Endothelial cell of umbilical vein (primary cell): ENCODE measurements at regions of chr9 and their contacts with region 1.

Region 1: DNA sequence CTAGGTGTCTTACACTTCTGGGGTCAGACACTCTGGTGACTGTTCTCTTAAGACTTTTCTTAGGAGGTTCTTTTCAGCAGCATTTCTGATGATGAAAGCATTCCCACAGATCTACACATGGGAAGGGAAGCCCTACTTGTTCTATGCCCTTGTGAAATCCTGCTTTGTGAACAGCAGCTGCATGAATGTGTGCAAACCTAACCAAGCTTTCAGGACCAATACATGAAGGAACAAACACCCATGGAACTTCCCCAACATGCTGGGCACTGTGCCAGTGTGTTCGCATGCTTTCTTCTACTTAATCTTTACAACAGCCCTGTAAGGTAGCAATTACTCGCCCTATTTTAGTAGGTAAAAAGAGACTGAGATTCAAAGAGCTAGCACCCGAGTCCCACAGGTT is 439.9 kb upstream of the KLF4 start:
- DNase-seq: no peak
- H3K4me3 ChIP-seq: no peak overlapping the region
- H3K27ac ChIP-seq: no peak overlapping the region
- H3K4me1 ChIP-seq: no peaks in the 10 kb centered on the region
- H3K27me3 ChIP-seq: no peaks in the 10 kb centered on the region
- CTCF ChIP-seq: no peak
- POLR2A ChIP-seq: no peak

Region 2: DNA sequence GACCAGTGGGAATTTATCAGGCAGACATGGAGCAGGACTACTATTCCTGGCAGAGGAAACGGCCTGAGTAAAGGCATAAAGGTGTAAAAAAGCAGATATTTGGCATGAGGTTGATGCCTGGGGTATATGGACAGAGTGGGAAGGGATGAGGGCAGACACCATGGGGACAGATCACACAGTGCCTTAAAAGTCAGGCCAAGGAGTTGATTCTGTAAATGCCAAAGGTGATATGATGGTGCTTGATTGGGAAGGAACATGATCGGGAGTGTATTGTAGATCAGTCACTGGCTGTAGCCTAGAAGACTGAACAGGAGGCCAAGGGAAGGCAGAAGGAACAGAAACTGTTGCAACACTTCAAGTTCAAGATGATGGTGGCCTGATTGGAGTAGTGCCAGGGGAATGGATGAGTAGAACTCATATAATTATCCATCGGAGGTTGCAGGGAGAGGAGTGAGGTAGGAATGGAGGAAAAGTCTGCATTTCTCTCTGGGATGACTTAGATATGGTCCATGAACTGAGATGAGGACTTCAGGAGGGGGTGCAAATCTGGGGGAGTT is 154.4 kb after region 1 on chr9:
- CTCF ChIA-PET with region 1: no interaction called
- POLR2A ChIA-PET with region 1: no interaction called
- dilution Hi-C with region 1: loop called (anchors 10 kb)
- intact Hi-C with region 1: no loop called
- DNase-seq: no peak
- H3K4me3 ChIP-seq: no peak overlapping the region
- H3K27ac ChIP-seq: no peak overlapping the region
- H3K4me1 ChIP-seq: no peaks in the 10 kb centered on the region
- H3K27me3 ChIP-seq: no peaks in the 10 kb centered on the region
- CTCF ChIP-seq: no peak
- POLR2A ChIP-seq: no peak